GM10248 (cell line): ENCODE measurements at regions of chr3 and their contacts with region 1.

Region 1: GRCh38 chr3:52339612-52340011 is 23.5 kb downstream of the DNAH1 start:
- DNase-seq: peak; percentile 70
- CTCF ChIP-seq: peak; percentile 62

Region 2: GRCh38 chr3:52231502-52232293 is 107.9 kb before region 1 on chr3:
- CTCF ChIA-PET with region 1: interaction called, 140 read pairs
- POLR2A ChIA-PET with region 1: no interaction called
- DNase-seq: peak; percentile 81
- CTCF ChIP-seq: peak; percentile 96

Region 3: DNA sequence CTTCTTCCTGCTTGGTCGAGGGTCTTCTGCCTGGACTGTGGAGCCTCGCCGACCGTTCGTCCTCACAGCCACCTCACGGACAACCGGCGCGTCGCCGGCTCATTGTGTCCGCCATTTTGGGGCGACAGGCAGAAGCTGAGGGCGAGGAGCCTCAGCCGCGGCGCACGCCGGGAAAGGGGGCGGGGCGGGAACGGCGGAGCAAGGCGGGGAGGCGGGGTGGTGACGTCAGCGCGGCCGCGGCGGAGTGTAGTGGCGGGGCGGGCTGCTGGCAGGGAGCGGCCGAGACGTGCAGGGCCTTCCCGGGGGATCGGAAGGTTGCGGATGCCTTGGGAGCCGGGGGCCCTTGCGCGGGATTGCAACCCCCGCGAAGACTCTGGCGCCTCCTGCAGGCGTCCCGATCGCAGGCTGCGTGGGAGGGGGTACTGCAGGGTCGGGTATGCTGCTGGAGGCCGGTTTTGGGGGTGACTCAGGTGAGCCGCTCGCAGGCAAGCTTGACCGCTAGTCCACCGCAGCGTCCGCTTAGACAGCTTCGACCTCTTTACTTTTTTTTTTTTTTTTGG is 61.0 kb before region 1 on chr3 and contains the start of gene WDR82:
- CTCF ChIA-PET with region 1: interaction called, 290 read pairs
- POLR2A ChIA-PET with region 1: no interaction called
- DNase-seq: peak; percentile 96
- CTCF ChIP-seq: no peak

Region 4: GRCh38 chr3:52310861-52311575 is 28.6 kb before region 1 on chr3:
- CTCF ChIA-PET with region 1: interaction called, 13 read pairs
- POLR2A ChIA-PET with region 1: no interaction called
- DNase-seq: peak; percentile 87
- CTCF ChIP-seq: no peak

Region 5: DNA sequence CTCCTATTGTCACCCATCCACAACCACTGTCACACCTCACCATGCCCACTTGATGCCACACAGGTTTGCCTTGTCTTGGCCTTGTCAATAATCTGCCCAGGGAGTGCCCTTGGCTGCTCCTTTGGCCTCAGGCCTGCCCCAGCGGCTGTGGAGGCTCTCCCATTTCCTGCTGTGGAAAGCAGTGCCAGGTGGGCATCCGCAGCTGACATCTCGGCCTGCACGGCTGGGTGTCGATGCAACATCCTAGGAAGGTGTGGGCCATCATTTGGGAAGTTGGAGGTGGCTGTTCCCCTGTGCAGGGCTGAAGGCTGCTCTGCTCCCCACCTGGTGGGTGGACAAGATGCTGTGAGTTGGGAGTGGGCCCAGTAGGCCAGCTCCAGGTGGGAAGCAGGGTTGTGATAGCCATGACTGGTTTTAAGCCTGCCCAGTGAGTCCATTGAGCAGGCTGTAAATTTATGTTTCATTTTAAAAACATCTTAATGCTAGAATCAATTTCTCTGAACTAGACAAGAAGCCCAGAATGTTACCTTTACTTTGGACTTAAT is 11.0 kb before region 1 on chr3:
- CTCF ChIA-PET with region 1: interaction called, 48 read pairs
- POLR2A ChIA-PET with region 1: interaction called, 3 read pairs
- DNase-seq: no peak
- CTCF ChIP-seq: no peak

Region 6: GRCh38 chr3:52366527-52366926 is 26.9 kb after region 1 on chr3:
- CTCF ChIA-PET with region 1: interaction called, 13 read pairs
- POLR2A ChIA-PET with region 1: no interaction called
- DNase-seq: no peak
- CTCF ChIP-seq: no peak